Calu3 (cell line): ENCODE measurements at regions of chr2 and their contacts with region 1.

Region 1: DNA sequence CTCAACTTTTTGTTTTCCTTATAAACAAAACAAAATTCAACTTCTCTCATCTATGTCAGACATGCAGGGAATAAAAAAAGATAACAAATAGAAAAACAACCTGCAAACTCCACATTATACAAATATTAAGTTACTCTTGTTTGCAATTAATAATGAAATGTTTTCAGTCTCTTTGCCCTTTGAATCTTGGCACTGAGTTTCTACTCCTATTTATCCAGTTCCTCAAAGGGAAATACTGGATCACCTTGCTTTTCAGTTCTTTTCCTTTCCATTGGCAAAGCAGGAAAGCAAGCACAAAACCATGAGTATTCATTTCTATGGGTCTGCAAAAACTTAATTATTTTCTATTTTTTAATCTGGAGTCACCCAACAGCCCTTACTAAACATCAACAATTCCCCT is 23.6 kb downstream of the KANSL1L start:
- DNase-seq: no peak
- H3K4me3 Mint-ChIP-seq: no peak overlapping the region
- H3K27ac Mint-ChIP-seq: no peak overlapping the region
- H3K4me1 Mint-ChIP-seq: no peaks in the 10 kb centered on the region
- H3K27me3 Mint-ChIP-seq: no peaks in the 10 kb centered on the region
- CTCF ChIP-seq: no peak

Region 2: DNA sequence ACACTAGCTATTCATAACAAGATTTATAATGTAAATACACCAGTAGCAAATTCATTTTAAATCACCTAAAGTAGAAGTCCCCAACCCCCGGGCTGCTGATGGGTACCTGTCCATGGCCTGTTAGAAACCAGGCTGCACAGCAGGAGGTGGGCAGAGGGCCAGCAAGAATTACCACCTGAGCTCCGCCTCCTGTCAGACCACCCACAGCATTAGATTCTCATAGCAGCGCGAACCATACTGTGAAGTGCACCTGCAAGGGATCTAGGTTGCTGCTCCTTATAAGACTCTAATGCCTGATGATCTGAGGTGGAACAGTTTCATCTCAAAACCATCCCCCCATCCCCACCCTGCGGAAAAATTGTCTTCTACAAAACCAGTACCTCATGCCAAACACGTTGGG is 47.7 kb before region 1 on chr2:
- CTCF ChIA-PET with region 1: no interaction called
- intact Hi-C with region 1: loop called (anchors 5 kb)
- DNase-seq: no peak
- H3K4me3 Mint-ChIP-seq: no peak overlapping the region
- H3K27ac Mint-ChIP-seq: no peak overlapping the region
- H3K4me1 Mint-ChIP-seq: no peaks in the 10 kb centered on the region
- H3K27me3 Mint-ChIP-seq: no peaks in the 10 kb centered on the region
- CTCF ChIP-seq: no peak